Adrenal gland (tissue), 19 donors: ENCODE measurements at regions of chr16 and their contacts with region 1.

Region 1: DNA sequence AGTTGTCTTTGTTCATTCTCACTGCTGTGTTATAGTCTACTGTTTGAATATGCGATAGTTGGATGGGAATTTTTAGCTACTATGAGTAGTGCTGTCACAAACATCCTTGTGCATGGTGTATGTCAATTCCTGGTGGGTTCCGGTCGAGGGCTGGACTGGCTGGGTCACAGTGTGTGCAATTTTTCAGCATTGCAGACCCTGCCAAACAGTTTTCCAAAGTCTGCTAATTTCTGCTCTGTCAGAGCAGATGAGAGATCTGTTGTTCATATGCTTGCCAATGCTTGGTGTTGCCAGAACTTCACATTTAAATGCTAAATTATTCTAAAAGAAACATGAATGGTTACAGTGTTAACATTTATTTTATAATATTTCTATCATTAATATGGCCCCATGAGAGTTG is 3.6 kb upstream of the C16orf96 start:
- DNase-seq: no peak
- H3K4me3 ChIP-seq: no peak overlapping the region
- H3K27ac ChIP-seq: no peak overlapping the region
- H3K4me1 ChIP-seq: no peaks in the 10 kb centered on the region
- H3K27me3 ChIP-seq: no peaks in the 10 kb centered on the region
- CTCF ChIP-seq: no peak
- POLR2A ChIP-seq: no peak

Region 2: GRCh38 chr16:4506450-4506849 is 46.1 kb before region 1 on chr16:
- intact Hi-C with region 1: loop called (anchors 2 to 5 kb)
- DNase-seq: peak; percentile 73 to 89 (median 79)
- H3K4me3 ChIP-seq: no peak overlapping the region
- H3K27ac ChIP-seq: no peak overlapping the region
- H3K4me1 ChIP-seq: peaks cover 0 to 9% of the 10 kb centered on the region in 2 donors
- H3K27me3 ChIP-seq: no peaks in the 10 kb centered on the region
- CTCF ChIP-seq: peak; percentile 77 to 94 (median 88)
- POLR2A ChIP-seq: no peak